ENCODE measurements at regions of chr1 and their contacts with region 1.

Region 1: GRCh38 chr1:114282751-114283403 is 129.2 kb upstream of the SYT6 start:
- DNase-seq: peak; percentile 76 to 81 (median 78)
- H3K4me3 ChIP-seq: no peak overlapping the region
- H3K4me3 Mint-ChIP-seq: no peak overlapping the region
- H3K27ac ChIP-seq: no peak overlapping the region
- H3K27ac Mint-ChIP-seq: no peak overlapping the region
- H3K4me1 ChIP-seq: no peaks in the 10 kb centered on the region
- H3K4me1 Mint-ChIP-seq: peaks cover 0 to 5% (median under 1%) of the 10 kb centered on the region in 4 donors
- H3K27me3 ChIP-seq: no peaks in the 10 kb centered on the region
- H3K27me3 Mint-ChIP-seq: peaks cover 0 to 1% of the 10 kb centered on the region in 2 donors

Region 2: GRCh38 chr1:113978863-113979702 is 303.8 kb before region 1 on chr1 and contains the start of gene OLFML3:
- CTCF ChIA-PET with region 1: interaction called, 16 read pairs
- POLR2A ChIA-PET with region 1: no interaction called
- intact Hi-C with region 1: loop called (anchors 1 kb)
- DNase-seq: peak in 3 of 5 donors; percentile 17 to 27 (median 22)
- H3K4me3 ChIP-seq: no peak within 1 kb of the TSS
- H3K4me3 Mint-ChIP-seq: peak within 1 kb of the TSS in 1 of 8 donors; percentile 17
- H3K27ac ChIP-seq: no peak within 1 kb of the TSS
- H3K27ac Mint-ChIP-seq: peak within 1 kb of the TSS in 5 of 7 donors; percentile 30 to 67 (median 50)
- H3K4me1 ChIP-seq: no peaks in the 10 kb centered on the region
- H3K4me1 Mint-ChIP-seq: peaks cover 11 to 41% (median 27%) of the 10 kb centered on the region in 4 donors
- H3K27me3 ChIP-seq: no peaks in the 10 kb centered on the region
- H3K27me3 Mint-ChIP-seq: no peaks in the 10 kb centered on the region
- total RNA-seq, gene OLFML3: 0.42 to 0.70 TPM

Region 3: DNA sequence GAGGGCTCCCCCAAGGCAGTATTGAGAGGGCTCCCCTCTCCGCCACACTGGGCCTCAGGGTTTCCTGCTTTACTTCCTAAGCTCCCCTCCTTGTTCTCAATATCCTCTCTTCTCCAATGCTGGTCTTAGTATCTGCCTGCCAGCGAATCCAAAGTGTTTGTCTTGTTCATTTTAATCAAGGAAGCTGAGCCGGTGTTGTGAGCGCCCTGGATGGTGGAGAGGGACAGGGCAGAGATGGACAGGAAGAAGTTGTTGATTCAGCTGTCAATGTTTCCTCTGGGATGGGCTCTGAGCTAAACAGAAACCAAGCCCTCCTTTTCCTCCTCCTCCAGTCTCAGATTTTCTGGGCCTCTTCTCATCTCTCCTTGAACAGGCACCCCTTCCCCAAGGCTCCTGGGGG is 298.2 kb before region 1 on chr1:
- CTCF ChIA-PET with region 1: interaction called, 16 read pairs
- POLR2A ChIA-PET with region 1: no interaction called
- intact Hi-C with region 1: loop called (anchors 2 kb)
- DNase-seq: no peak
- H3K4me3 ChIP-seq: no peak overlapping the region
- H3K4me3 Mint-ChIP-seq: no peak overlapping the region
- H3K27ac ChIP-seq: no peak overlapping the region
- H3K27ac Mint-ChIP-seq: peak overlapping the region in 1 of 7 donors; percentile 39
- H3K4me1 ChIP-seq: no peaks in the 10 kb centered on the region
- H3K4me1 Mint-ChIP-seq: peaks cover 0 to 3% (median 1%) of the 10 kb centered on the region in 4 donors
- H3K27me3 ChIP-seq: no peaks in the 10 kb centered on the region
- H3K27me3 Mint-ChIP-seq: peaks cover 2% of the 10 kb centered on the region in 2 donors

Region 4: DNA sequence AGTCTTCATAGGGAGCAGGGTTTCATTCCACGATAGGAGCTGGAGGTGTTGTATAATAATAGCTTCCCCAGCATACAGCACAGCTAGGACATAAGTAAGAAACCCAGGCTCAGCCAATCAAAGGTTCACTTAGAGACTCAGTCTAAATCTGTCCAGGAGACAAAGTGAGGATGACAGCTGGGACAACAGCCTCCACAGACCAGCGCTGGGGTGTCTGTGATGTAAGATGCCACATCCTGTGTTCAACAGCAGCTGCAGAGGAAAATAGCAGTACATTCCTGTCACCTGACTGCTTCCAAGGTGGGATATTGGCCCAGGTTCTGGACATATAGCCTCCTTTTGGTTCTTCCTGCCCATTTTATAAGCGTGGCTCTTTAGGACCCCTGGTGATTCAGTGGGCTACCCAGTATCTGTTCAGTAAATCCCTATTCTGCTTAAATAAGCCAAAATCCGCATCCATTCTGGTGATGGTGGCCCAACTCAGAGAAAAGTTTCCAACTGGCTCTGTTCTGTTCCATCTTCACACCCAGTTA is 47.6 kb after region 1 on chr1:
- CTCF ChIA-PET with region 1: interaction called, 15 read pairs
- POLR2A ChIA-PET with region 1: no interaction called
- intact Hi-C with region 1: no loop called
- DNase-seq: peak; percentile 22 to 47 (median 35)
- H3K4me3 ChIP-seq: no peak overlapping the region
- H3K4me3 Mint-ChIP-seq: peak overlapping the region in 6 of 8 donors; percentile 4 to 74 (median 34)
- H3K27ac ChIP-seq: no peak overlapping the region
- H3K27ac Mint-ChIP-seq: peak overlapping the region in 6 of 7 donors; percentile 8 to 90 (median 86)
- H3K4me1 ChIP-seq: peaks cover 67% of the 10 kb centered on the region
- H3K4me1 Mint-ChIP-seq: peaks cover 44 to 73% (median 61%) of the 10 kb centered on the region in 4 donors
- H3K27me3 ChIP-seq: no peaks in the 10 kb centered on the region
- H3K27me3 Mint-ChIP-seq: peaks cover 0 to 1% of the 10 kb centered on the region in 2 donors